ENCODE measurements at regions of chr2 and their contacts with region 1.

Region 1: GRCh38 chr2:133780099-133780839 is 212.0 kb upstream of the NCKAP5 start:
- DNase-seq: peak; percentile 74
- H3K4me3 Mint-ChIP-seq: no peak overlapping the region
- H3K27ac Mint-ChIP-seq: no peak overlapping the region
- H3K4me1 Mint-ChIP-seq: no peaks in the 10 kb centered on the region
- H3K27me3 Mint-ChIP-seq: no peaks in the 10 kb centered on the region
- CTCF ChIP-seq: peak; percentile 75

Region 2: GRCh38 chr2:132267105-132267497 is 1513.2 kb before region 1 on chr2:
- CTCF ChIA-PET with region 1: no interaction called
- POLR2A ChIA-PET with region 1: no interaction called
- intact Hi-C with region 1: loop called (anchors 5 kb)
- DNase-seq: no peak
- H3K4me3 Mint-ChIP-seq: no peak overlapping the region
- H3K27ac Mint-ChIP-seq: no peak overlapping the region
- H3K4me1 Mint-ChIP-seq: no peaks in the 10 kb centered on the region
- H3K27me3 Mint-ChIP-seq: no peaks in the 10 kb centered on the region
- CTCF ChIP-seq: no peak

Region 3: GRCh38 chr2:133262888-133263287 is 517.4 kb before region 1 on chr2:
- CTCF ChIA-PET with region 1: interaction called, 5 read pairs
- POLR2A ChIA-PET with region 1: no interaction called
- intact Hi-C with region 1: loop called (anchors 2 kb)
- DNase-seq: no peak
- H3K4me3 Mint-ChIP-seq: no peak overlapping the region
- H3K27ac Mint-ChIP-seq: no peak overlapping the region
- H3K4me1 Mint-ChIP-seq: no peaks in the 10 kb centered on the region
- H3K27me3 Mint-ChIP-seq: peaks cover 11% of the 10 kb centered on the region
- CTCF ChIP-seq: peak; percentile 35

Region 4: DNA sequence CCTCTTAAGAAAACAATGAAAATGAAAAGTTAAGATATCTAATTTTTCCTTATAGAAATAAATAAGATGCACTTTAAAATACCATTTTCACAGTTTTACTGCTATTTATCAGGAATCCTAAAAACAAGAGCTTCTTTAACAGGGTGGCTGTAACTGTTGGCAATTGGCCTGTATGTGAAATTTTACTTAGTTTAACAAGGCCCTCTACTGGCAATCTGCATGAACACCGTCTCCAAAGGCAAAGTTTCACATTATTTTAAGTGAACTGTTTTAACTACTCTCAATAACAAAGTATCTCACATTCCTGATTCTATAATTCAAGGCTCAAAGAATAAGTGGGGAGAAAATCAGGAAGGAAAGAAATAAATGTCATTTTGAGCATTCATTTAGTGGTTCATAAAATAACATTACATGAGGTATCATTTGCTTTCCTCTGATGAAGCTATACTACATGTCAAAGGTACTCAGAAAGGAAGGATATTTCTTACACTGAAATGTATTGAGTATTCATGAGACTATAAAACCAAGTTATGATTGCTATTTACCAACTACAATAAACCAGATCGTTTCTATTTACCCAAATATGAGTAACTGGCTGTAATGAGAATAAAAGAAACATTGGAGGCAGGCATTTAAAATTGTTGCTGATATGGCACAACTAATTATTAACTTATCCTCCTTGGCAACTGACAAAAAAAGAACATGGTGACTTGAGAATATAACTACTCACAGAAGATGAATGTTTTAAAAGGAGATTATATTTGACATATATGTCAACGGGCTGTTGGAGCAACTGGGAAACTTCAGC is 219.0 kb before region 1 on chr2:
- CTCF ChIA-PET with region 1: interaction called, 8 read pairs
- POLR2A ChIA-PET with region 1: no interaction called
- intact Hi-C with region 1: loop called (anchors 2 kb)
- DNase-seq: peak; percentile 14
- H3K4me3 Mint-ChIP-seq: no peak overlapping the region
- H3K27ac Mint-ChIP-seq: no peak overlapping the region
- H3K4me1 Mint-ChIP-seq: no peaks in the 10 kb centered on the region
- H3K27me3 Mint-ChIP-seq: no peaks in the 10 kb centered on the region
- CTCF ChIP-seq: peak; percentile 59

Region 5: GRCh38 chr2:133765658-133766057 is 14.6 kb before region 1 on chr2:
- CTCF ChIA-PET with region 1: interaction called, 16 read pairs
- POLR2A ChIA-PET with region 1: no interaction called
- intact Hi-C with region 1: no loop called
- DNase-seq: no peak
- H3K4me3 Mint-ChIP-seq: no peak overlapping the region
- H3K27ac Mint-ChIP-seq: no peak overlapping the region
- H3K4me1 Mint-ChIP-seq: peaks cover 7% of the 10 kb centered on the region
- H3K27me3 Mint-ChIP-seq: no peaks in the 10 kb centered on the region
- CTCF ChIP-seq: no peak